ENCODE measurements at regions of chrX and their contacts with region 1.

Region 1: DNA sequence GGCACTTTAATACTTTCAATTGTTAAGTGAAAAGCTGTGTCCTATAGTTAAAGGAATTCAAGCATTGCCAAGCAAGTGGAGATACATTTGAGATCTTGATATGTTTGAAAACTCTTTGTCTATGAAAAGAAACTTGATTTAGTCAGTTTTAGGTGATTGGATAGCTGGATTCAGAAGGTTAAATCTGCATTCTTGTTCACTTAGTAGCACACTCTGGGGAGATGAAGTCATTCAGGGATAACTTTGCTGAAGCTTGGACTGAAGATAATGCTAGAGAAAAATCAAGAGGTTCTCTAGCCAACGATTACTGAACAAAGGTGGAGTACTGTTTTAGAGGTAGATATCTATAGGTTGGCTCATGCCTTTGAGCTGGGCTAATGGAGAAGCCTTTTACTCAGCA is 90.6 kb downstream of the DCAF8L2 start:
- DNase-seq: no peak
- ATAC-seq: no peak

Region 2: DNA sequence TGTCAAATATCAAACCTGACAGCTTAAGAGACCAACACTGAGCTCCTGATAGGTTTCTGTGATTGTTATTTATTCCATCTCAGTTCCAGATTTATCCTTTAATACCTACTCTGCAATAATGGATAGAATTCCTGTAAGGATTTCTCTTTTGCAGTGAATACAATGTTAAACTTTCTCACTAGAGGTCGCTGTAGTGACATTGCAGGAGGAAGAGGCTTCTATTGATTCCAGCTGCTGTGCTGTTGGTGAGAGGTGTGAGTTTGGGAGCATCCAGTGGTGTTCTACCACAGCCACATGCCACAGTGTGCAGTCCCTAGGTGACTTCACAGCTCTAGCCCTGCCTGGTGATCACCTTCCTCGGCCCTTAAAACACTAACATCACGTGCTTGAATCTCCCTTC is 125.2 kb before region 1 on chrX:
- intact Hi-C with region 1: loop called (anchors 5 kb)
- DNase-seq: no peak
- ATAC-seq: no peak

Region 3: DNA sequence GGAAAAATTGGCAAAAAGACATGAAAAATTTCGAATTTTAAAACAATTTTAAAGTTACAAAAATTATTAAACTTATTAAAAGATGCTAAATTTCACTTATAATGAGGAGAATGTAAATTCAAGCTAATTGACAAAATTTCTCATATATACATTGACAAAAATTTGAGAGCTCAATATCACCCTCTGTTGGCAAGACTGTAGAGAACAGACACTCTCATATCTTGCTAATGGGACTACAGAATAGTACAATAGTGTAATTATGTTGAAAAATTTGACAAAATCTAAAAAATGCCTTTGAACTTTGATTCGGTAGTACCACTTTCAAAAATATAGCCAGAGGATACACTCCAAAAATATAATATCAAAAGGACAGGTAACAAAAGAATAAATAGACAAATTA is 60.8 kb before region 1 on chrX:
- intact Hi-C with region 1: no loop called
- DNase-seq: no peak
- ATAC-seq: no peak

Measured in Right ventricle myocardium superior (tissue), 1 donor.